ENCODE measurements at regions of chr1 and their contacts with region 1.

Region 1: DNA sequence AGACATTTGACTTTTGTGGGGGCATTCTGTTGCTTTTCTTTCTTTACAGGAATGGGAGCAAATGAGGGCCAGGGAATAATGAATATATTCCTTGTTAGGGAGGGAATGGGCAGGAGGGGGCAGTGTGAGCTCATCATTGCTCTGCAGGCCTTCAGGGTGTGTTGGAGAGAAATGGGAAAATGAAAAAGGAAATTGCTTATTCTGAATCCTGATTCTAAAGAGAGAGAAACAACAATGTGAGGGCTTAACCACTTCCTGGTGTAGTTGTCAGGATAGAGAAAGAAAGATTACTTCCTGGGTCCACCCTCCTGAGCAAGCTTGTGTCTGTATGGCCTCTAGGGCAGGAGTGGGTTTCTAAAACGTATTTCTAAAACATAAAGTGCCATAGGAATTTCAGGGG is 28.3 kb downstream of the VANGL2 start:
- DNase-seq: no peak
- ATAC-seq: no peak
- H3K4me3 Mint-ChIP-seq: peak overlapping the region; percentile 44
- H3K27ac Mint-ChIP-seq: peak overlapping the region; percentile 95
- H3K4me1 Mint-ChIP-seq: peaks cover 61% of the 10 kb centered on the region
- H3K27me3 Mint-ChIP-seq: no peaks in the 10 kb centered on the region
- CTCF ChIP-seq: no peak

Region 2: DNA sequence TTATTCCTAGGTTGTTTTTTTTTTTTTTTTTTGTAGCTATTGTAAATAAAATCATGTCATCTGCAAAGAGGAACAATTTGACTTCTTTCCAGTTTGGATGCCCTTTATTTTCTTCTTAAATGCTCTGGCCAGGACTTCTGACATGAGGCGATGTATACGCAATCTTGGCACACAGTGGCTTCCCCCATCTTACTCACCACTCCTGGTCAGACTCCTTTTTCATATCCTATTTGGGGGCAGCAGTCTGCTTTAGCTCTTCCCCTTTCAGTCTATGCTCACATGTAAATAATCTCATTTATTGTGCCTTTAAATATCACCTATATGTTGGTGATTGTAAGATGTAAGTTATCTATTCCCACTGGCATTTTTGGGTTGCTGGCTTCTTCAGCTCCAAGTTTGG is 38.3 kb after region 1 on chr1:
- CTCF ChIA-PET with region 1: interaction called, 10 read pairs
- POLR2A ChIA-PET with region 1: interaction called, 19 read pairs
- intact Hi-C with region 1: loop called (anchors 2 kb)
- DNase-seq: no peak
- ATAC-seq: no peak
- H3K4me3 Mint-ChIP-seq: no peak overlapping the region
- H3K27ac Mint-ChIP-seq: peak overlapping the region; percentile 67
- H3K4me1 Mint-ChIP-seq: peaks cover 49% of the 10 kb centered on the region
- H3K27me3 Mint-ChIP-seq: no peaks in the 10 kb centered on the region
- CTCF ChIP-seq: no peak

Region 3: GRCh38 chr1:160483505-160484185 is 55.0 kb after region 1 on chr1:
- CTCF ChIA-PET with region 1: interaction called, 17 read pairs
- POLR2A ChIA-PET with region 1: interaction called, 54 read pairs
- intact Hi-C with region 1: loop called (anchors 1 kb)
- DNase-seq: no peak
- ATAC-seq: no peak
- H3K4me3 Mint-ChIP-seq: no peak overlapping the region
- H3K27ac Mint-ChIP-seq: peak overlapping the region; percentile 67
- H3K4me1 Mint-ChIP-seq: peaks cover 51% of the 10 kb centered on the region
- H3K27me3 Mint-ChIP-seq: no peaks in the 10 kb centered on the region
- CTCF ChIP-seq: no peak

Region 4: GRCh38 chr1:160519642-160520435 is 91.2 kb after region 1 on chr1:
- CTCF ChIA-PET with region 1: interaction called, 15 read pairs
- POLR2A ChIA-PET with region 1: interaction called, 28 read pairs
- intact Hi-C with region 1: loop called (anchors 1 kb)
- DNase-seq: no peak
- ATAC-seq: peak; percentile 41
- H3K4me3 Mint-ChIP-seq: peak overlapping the region; percentile 97
- H3K27ac Mint-ChIP-seq: peak overlapping the region; percentile 95
- H3K4me1 Mint-ChIP-seq: peaks cover 92% of the 10 kb centered on the region
- H3K27me3 Mint-ChIP-seq: no peaks in the 10 kb centered on the region
- CTCF ChIP-seq: no peak

Region 5: GRCh38 chr1:160550572-160551034 is 121.9 kb after region 1 on chr1:
- CTCF ChIA-PET with region 1: interaction called, 27 read pairs
- POLR2A ChIA-PET with region 1: interaction called, 6 read pairs
- intact Hi-C with region 1: no loop called
- DNase-seq: no peak
- ATAC-seq: no peak
- H3K4me3 Mint-ChIP-seq: no peak overlapping the region
- H3K27ac Mint-ChIP-seq: peak overlapping the region; percentile 90
- H3K4me1 Mint-ChIP-seq: peaks cover 86% of the 10 kb centered on the region
- H3K27me3 Mint-ChIP-seq: no peaks in the 10 kb centered on the region
- CTCF ChIP-seq: no peak

Region 6: GRCh38 chr1:160675641-160676410 is 247.2 kb after region 1 on chr1:
- CTCF ChIA-PET with region 1: interaction called, 18 read pairs
- POLR2A ChIA-PET with region 1: interaction called, 3 read pairs
- intact Hi-C with region 1: loop called (anchors 2 kb)
- DNase-seq: peak; percentile 60
- ATAC-seq: peak; percentile 81
- H3K4me3 Mint-ChIP-seq: peak overlapping the region; percentile 44
- H3K27ac Mint-ChIP-seq: peak overlapping the region; percentile 61
- H3K4me1 Mint-ChIP-seq: peaks cover 14% of the 10 kb centered on the region
- H3K27me3 Mint-ChIP-seq: no peaks in the 10 kb centered on the region
- CTCF ChIP-seq: peak; percentile 57